ENCODE measurements at regions of chr12 and their contacts with region 1.

Region 1: DNA sequence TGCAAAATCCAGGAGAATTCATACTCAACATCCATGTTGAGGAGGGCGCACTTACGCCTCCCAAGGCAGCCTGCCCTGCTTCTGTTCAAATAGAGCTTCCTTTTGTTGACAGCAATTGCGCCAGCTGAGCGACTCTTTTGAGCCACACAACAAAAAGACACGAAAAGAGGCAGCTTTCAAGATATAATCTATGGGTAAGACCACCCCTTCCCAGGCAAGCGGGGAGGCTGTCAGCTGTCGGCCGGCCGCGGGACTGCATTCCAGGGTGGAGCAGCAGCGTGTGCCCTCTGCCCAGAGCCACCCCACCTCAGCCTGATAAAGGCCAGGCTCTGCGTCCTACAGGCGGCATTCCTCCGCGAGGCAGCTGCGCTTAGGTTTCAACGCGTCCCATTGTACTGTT is 15.8 kb upstream of the STAB2 start:
- DNase-seq: no peak
- H3K4me3 Mint-ChIP-seq: no peak overlapping the region
- H3K27ac Mint-ChIP-seq: no peak overlapping the region
- H3K4me1 Mint-ChIP-seq: peaks cover 3% of the 10 kb centered on the region
- H3K27me3 Mint-ChIP-seq: peaks cover 46% of the 10 kb centered on the region

Region 2: DNA sequence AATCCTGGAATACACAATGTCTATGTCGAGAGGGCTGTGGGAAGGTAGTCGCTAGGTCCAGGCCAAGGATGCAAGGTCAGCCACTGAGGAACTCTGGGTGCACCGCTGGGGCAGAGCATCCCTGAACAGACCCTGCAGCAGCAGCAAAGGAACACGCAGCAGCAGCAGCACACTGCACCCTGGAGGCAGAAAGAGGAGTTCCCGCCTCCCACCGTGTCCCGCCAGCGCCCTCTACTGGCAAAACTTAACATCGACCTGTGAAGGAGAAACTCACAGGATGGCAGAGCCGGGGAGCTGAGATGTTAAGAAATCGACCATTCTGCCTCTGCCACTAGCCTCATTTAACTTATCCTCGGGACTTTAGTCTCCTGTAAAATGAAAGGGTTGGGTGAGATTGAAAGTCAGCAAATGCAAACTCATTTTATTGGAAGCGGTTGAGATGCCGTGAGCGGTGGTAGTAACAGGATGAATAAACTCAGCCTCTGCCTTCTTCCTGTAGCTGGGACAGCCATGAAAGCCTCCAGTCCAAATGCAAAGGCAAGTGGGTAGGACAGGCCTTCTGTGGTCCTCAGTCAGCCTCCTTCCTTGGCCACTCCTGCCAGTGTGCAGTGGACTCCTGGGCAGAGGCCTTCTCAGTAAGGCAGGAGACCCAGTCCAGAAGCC is 61.4 kb after region 1 on chr12:
- intact Hi-C with region 1: loop called (anchors 1 kb)
- DNase-seq: peak; percentile 65
- H3K4me3 Mint-ChIP-seq: no peak overlapping the region
- H3K27ac Mint-ChIP-seq: no peak overlapping the region
- H3K4me1 Mint-ChIP-seq: no peaks in the 10 kb centered on the region
- H3K27me3 Mint-ChIP-seq: peaks cover 3% of the 10 kb centered on the region

Measured in activated T-helper 2 cell treated with anti-CD3 and anti-CD28 coated beads, Interferon-gamma antibody, Interleukin-2, Interleukin-4, amounts not matched to agents 10 μg/mL and 5 μg/mL and 100 μg/mL, durations not matched to agents 14 hours and 24 hours and 36 hours (primary cell).